Natural killer cell (primary cell): ENCODE measurements at regions of chrX and their contacts with region 1.

Region 1: DNA sequence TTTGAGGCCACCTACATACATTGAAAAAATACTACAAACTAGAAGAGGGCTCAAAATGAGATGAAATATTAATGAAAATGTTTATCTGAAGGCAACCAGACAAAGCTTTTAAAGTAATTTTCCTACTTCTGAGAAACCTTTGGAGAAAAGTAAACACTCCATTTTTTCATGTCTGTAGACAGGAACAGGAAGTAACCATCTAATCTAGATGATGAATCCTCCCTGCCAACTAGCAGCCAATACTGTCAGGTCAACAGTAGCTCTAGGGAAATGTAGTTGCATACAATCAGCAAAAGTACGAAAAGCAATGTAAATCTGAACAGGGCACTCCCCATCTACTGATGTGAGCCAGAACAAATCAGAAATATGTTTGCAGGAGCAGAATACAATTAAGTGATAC is 49.0 kb downstream of the AMMECR1 start:
- DNase-seq: peak in 1 of 2 donors; percentile 8
- ATAC-seq: no peak
- H3K4me3 ChIP-seq: no peak overlapping the region
- H3K4me3 Mint-ChIP-seq: no peak overlapping the region
- H3K27ac ChIP-seq: no peak overlapping the region
- H3K27ac Mint-ChIP-seq: peak overlapping the region; percentile 86 to 87
- H3K4me1 ChIP-seq: no peaks in the 10 kb centered on the region
- H3K4me1 Mint-ChIP-seq: peaks cover 14 to 22% of the 10 kb centered on the region in 2 donors
- H3K27me3 ChIP-seq: no peaks in the 10 kb centered on the region
- H3K27me3 Mint-ChIP-seq: no peaks in the 10 kb centered on the region
- CTCF ChIP-seq: no peak

Region 2: DNA sequence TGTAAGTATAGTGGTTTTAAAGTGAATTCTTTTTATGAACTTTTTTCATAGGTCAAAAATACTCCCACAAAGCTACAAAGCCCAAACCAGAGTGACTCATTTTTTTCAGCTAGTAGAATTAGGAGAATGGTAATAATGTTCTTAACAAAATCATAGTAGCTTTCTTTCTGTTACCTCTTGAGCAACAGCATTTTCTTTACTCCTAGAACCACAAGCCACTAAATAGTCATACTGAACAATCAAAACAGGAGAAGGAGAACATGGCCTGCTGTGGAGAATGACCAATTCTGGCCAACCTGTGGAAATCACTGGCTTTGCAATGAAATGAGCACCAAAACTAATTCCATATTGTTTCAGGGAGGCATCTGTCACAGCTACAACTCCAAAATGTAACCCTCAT is 63.9 kb before region 1 on chrX:
- intact Hi-C with region 1: loop called (anchors 10 kb)
- DNase-seq: no peak
- ATAC-seq: no peak
- H3K4me3 ChIP-seq: no peak overlapping the region
- H3K4me3 Mint-ChIP-seq: no peak overlapping the region
- H3K27ac ChIP-seq: no peak overlapping the region
- H3K27ac Mint-ChIP-seq: no peak overlapping the region
- H3K4me1 ChIP-seq: no peaks in the 10 kb centered on the region
- H3K4me1 Mint-ChIP-seq: peaks cover 0 to 12% of the 10 kb centered on the region in 2 donors
- H3K27me3 ChIP-seq: no peaks in the 10 kb centered on the region
- H3K27me3 Mint-ChIP-seq: peaks cover 0 to 6% of the 10 kb centered on the region in 2 donors
- CTCF ChIP-seq: no peak

Region 3: DNA sequence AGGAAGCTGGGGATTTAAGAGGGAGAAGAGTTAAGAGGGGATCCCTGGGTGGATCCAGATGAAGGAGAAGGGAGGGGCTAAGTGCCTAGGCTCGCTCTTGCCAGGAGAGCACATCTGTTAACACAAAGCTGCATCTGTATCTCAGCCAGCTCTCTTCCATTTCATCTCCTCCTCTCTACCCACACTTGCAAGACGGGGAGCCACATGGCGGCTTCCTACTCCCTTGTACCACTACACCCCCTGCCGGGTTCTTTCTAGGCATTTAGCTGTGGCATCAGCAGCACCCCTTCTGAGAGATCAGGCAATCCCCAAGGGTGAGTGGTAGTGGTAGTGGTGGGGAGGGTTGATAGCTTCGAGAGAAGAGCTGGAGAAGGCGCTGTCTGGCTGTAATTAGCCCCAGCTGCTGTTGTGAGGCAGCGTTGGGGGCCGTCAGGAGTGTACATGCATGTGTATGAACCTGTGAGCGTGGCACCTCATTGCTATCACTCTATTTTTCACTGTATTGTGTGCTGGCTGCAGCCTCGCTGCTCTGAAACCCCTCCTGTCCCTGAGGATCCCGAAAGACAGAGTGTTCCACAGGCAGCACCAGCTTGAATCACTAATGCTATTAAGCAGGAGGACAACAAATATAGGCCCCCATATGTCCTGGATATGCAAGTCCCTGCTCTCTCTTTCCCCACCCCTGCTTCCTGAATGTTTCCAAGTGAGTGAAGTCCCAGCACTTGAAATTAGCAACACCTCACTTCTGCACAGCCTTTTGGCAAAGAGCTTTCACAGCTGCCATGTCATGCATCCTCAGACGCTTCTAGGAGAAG is 163.4 kb after region 1 on chrX:
- intact Hi-C with region 1: no loop called
- DNase-seq: no peak
- ATAC-seq: no peak
- H3K4me3 ChIP-seq: no peak overlapping the region
- H3K4me3 Mint-ChIP-seq: no peak overlapping the region
- H3K27ac ChIP-seq: no peak overlapping the region
- H3K27ac Mint-ChIP-seq: no peak overlapping the region
- H3K4me1 ChIP-seq: no peaks in the 10 kb centered on the region
- H3K4me1 Mint-ChIP-seq: no peaks in the 10 kb centered on the region
- H3K27me3 ChIP-seq: no peaks in the 10 kb centered on the region
- H3K27me3 Mint-ChIP-seq: peaks cover 7 to 32% of the 10 kb centered on the region in 2 donors
- CTCF ChIP-seq: no peak